ENCODE measurements at regions of chr3 and their contacts with region 1.

Region 1: GRCh38 chr3:46208167-46208704 is at the start of gene CCR1:
- DNase-seq: peak; percentile 60
- ATAC-seq: peak; percentile 82
- H3K4me3 ChIP-seq: peak within 1 kb of the TSS in 4 of 5 experiments; percentile 4 to 51 (median 11)
- H3K4me3 Mint-ChIP-seq: peak within 1 kb of the TSS; percentile 40
- H3K27ac ChIP-seq: no peak within 1 kb of the TSS
- H3K27ac Mint-ChIP-seq: peak within 1 kb of the TSS; percentile 70
- H3K4me1 ChIP-seq: peaks cover 25 to 38% of the 10 kb centered on the region in 2 donors
- H3K4me1 Mint-ChIP-seq: peaks cover 45% of the 10 kb centered on the region
- H3K27me3 ChIP-seq: no peaks in the 10 kb centered on the region
- H3K27me3 Mint-ChIP-seq: no peaks in the 10 kb centered on the region
- CTCF ChIP-seq: peak; percentile 64
- total RNA-seq, gene CCR1: 0.79 and 1.1 TPM in 2 replicates

Region 2: GRCh38 chr3:46065294-46065721 is 142.9 kb before region 1 on chr3:
- CTCF ChIA-PET with region 1: no interaction called
- POLR2A ChIA-PET with region 1: no interaction called
- intact Hi-C with region 1: no loop called
- DNase-seq: peak; percentile 45
- ATAC-seq: peak; percentile 24
- H3K4me3 ChIP-seq: no peak overlapping the region
- H3K4me3 Mint-ChIP-seq: no peak overlapping the region
- H3K27ac ChIP-seq: no peak overlapping the region
- H3K27ac Mint-ChIP-seq: no peak overlapping the region
- H3K4me1 ChIP-seq: peaks cover 6 to 7% of the 10 kb centered on the region in 2 donors
- H3K4me1 Mint-ChIP-seq: no peaks in the 10 kb centered on the region
- H3K27me3 ChIP-seq: no peaks in the 10 kb centered on the region
- H3K27me3 Mint-ChIP-seq: peaks cover 2% of the 10 kb centered on the region
- CTCF ChIP-seq: no peak

Region 3: GRCh38 chr3:46089237-46090011 is 118.8 kb before region 1 on chr3:
- CTCF ChIA-PET with region 1: interaction called, 40 read pairs
- POLR2A ChIA-PET with region 1: no interaction called
- intact Hi-C with region 1: no loop called
- DNase-seq: peak; percentile 52
- ATAC-seq: peak; percentile 66
- H3K4me3 ChIP-seq: no peak overlapping the region
- H3K4me3 Mint-ChIP-seq: no peak overlapping the region
- H3K27ac ChIP-seq: no peak overlapping the region
- H3K27ac Mint-ChIP-seq: peak overlapping the region; percentile 29
- H3K4me1 ChIP-seq: peaks cover 50 to 58% of the 10 kb centered on the region in 2 donors
- H3K4me1 Mint-ChIP-seq: peaks cover 59% of the 10 kb centered on the region
- H3K27me3 ChIP-seq: no peaks in the 10 kb centered on the region
- H3K27me3 Mint-ChIP-seq: no peaks in the 10 kb centered on the region
- CTCF ChIP-seq: no peak

Region 4: GRCh38 chr3:46186471-46187340 is 21.5 kb before region 1 on chr3:
- CTCF ChIA-PET with region 1: interaction called, 17 read pairs
- POLR2A ChIA-PET with region 1: no interaction called
- intact Hi-C with region 1: loop called (anchors 2 kb)
- DNase-seq: peak; percentile 81
- ATAC-seq: peak; percentile 87
- H3K4me3 ChIP-seq: peak overlapping the region in 1 of 5 experiments; percentile 34
- H3K4me3 Mint-ChIP-seq: peak overlapping the region; percentile 59
- H3K27ac ChIP-seq: peak overlapping the region; percentile 30 to 53
- H3K27ac Mint-ChIP-seq: peak overlapping the region; percentile 62
- H3K4me1 ChIP-seq: peaks cover 39 to 43% of the 10 kb centered on the region in 2 donors
- H3K4me1 Mint-ChIP-seq: peaks cover 58% of the 10 kb centered on the region
- H3K27me3 ChIP-seq: no peaks in the 10 kb centered on the region
- H3K27me3 Mint-ChIP-seq: no peaks in the 10 kb centered on the region
- CTCF ChIP-seq: no peak

Region 5: GRCh38 chr3:46222435-46223161 is 14.4 kb after region 1 on chr3:
- CTCF ChIA-PET with region 1: interaction called, 21 read pairs
- POLR2A ChIA-PET with region 1: no interaction called
- intact Hi-C with region 1: no loop called
- DNase-seq: peak; percentile 66
- ATAC-seq: peak; percentile 72
- H3K4me3 ChIP-seq: no peak overlapping the region
- H3K4me3 Mint-ChIP-seq: peak overlapping the region; percentile 60
- H3K27ac ChIP-seq: peak overlapping the region; percentile 44 to 50
- H3K27ac Mint-ChIP-seq: peak overlapping the region; percentile 74
- H3K4me1 ChIP-seq: peaks cover 35 to 41% of the 10 kb centered on the region in 2 donors
- H3K4me1 Mint-ChIP-seq: peaks cover 49% of the 10 kb centered on the region
- H3K27me3 ChIP-seq: no peaks in the 10 kb centered on the region
- H3K27me3 Mint-ChIP-seq: no peaks in the 10 kb centered on the region
- CTCF ChIP-seq: no peak